Pancreas (tissue), 10 donors: ENCODE measurements at regions of chr10 and their contacts with region 1.

Region 1: DNA sequence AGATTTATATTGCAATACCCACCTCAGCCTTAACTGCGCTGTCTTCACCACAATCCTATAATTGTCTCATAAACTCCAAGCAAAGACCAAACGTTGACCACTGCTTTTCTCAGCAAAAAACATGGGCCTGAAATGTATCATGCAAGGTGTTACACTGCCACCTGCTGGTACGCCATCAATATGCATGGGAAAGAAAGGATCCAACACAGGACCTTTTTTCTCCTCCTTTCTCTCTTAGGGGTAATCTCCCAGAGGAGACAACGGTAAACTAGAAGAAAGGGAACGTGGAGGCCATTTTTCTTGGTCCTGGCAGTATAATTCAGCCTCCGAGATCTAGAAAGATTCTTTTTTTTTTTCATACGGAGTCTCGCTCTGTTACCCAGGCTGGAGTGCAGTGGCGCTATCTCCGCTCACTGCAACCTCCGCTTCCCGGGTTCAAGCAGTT is 79.1 kb upstream of the MPP7 start:
- DNase-seq: peak in 5 of 6 donors; percentile 76 to 89 (median 82)
- ATAC-seq: peak; percentile 92 to 99 (median 98)
- H3K4me3 ChIP-seq: no peak overlapping the region
- H3K27ac ChIP-seq: no peak overlapping the region
- H3K4me1 ChIP-seq: no peaks in the 10 kb centered on the region
- H3K27me3 ChIP-seq: no peaks in the 10 kb centered on the region
- CTCF ChIP-seq: peak; percentile 88 to 96 (median 92)

Region 2: DNA sequence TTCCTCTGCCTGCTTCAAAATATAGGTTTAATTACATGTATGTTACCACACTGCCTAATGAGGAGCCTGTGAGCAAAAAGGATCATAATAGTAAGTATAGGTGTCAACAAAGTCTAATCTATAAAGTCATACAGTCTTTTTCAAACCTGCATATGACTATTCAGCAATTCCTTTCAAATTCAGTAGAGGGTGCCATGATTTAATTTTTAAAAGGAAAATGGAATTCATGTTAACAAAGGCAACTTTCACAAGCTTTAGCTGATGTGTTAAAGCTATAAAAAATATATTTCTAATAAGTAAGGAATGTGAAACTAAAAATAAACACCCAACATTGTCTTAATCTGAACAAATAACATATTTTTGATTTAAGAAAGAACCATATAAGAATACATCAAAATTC is 131.1 kb before region 1 on chr10:
- intact Hi-C with region 1: loop called in 2 of 3 experiments (anchors 5 kb)
- DNase-seq: no peak
- ATAC-seq: peak; percentile 49 to 81 (median 70)
- H3K4me3 ChIP-seq: no peak overlapping the region
- H3K27ac ChIP-seq: no peak overlapping the region
- H3K4me1 ChIP-seq: peaks cover 0 to 12% (median 5%) of the 10 kb centered on the region in 3 donors
- H3K27me3 ChIP-seq: no peaks in the 10 kb centered on the region
- CTCF ChIP-seq: peak in 3 of 4 donors; percentile 37 to 58 (median 37)

Region 3: DNA sequence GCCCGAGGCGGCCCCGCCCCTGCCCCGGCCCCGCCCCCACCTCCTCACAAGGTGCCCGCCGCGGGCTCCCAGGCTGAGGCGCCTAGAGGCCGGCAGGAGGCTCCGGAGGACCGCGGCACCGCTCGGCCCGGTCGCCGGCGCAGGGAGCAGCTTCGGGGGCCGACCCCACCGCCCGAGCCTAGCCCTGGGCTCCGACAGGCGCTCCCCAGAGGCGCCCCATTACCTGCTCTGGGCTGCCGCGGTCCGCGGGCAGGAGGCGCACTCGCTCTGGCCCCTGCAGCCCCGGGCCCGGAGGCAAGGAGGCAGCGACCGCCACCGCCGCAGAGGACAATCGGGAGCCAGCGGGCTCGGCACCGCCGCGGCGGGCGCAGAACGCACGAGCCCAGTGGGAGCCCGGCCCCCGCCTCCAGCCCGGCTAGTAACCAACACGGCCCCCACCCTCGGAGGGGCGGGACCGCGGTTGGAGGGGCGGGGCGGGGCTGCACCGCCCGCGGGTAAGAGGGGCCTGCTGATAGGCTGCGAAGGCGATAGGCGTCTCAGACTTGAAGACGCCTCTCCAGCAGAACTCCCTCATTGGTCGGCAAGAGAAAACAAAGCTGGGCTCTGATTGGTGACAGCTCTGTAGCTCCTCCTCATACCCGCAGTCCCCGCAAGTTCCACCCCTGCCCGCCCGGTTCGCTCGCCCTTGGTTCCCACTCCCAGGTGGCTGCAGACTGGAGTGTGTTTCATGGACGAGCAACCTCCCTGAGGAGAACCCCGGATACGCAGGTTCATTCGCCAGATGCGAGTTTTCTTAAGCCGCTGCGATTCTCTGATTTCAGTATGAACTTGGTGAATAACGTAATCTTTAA is 79.1 kb before region 1 on chr10 and contains the start of gene MPP7:
- intact Hi-C with region 1: loop called in 1 of 3 experiments (anchors 10 kb)
- DNase-seq: peak; percentile 96 to 98 (median 97)
- ATAC-seq: peak; percentile 91 to 96 (median 94)
- H3K4me3 ChIP-seq: peak within 1 kb of the TSS; percentile 55 to 73 (median 69)
- H3K27ac ChIP-seq: peak within 1 kb of the TSS; percentile 88 to 97 (median 91)
- H3K4me1 ChIP-seq: peaks cover 7 to 18% (median 15%) of the 10 kb centered on the region in 3 donors
- H3K27me3 ChIP-seq: no peaks in the 10 kb centered on the region
- CTCF ChIP-seq: peak; percentile 6 to 31 (median 23)
- total RNA-seq, gene MPP7: 13.3 to 21.6 (median 16.0) TPM